HEK293T (cell line): ENCODE measurements at regions of chr10 and their contacts with region 1.

Region 1: DNA sequence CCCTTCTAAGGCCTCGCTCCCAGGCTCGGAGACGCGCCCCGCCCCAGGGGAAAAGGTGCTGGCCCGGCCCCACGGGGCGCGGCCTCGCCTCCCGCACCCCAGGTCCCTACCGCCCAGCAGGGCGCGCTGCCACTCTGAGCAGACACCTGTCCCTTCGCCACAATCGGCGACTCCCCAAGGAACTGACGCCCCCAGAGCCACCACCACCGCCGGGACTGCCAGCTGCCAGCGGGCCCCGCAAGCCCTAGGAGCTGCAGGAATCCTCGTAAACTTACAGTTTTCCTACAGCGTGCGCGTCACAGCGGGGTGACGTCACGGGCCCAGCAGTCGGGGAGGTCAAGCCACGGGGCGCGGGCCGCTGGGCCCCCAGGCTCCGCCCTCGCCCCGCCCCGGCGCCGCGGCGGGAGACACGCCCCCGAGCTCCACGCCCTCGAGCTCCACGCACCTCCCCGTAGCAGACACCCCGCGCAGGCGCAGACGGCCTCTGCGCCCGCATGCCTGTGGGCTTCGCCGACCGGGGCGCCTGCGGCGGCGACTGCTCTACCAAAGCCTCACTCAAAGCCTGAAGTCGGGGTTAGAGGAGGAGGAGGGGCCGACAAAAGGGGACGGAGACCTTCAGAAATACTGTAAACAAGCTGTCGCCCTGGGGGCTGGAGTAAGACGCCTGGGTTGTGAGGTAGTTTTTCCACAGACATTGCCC is at the start of gene ZNF438:
- DNase-seq: peak; percentile 93

Region 2: GRCh38 chr10:30783939-30784500 is 247.7 kb before region 1 on chr10:
- CTCF ChIA-PET with region 1: interaction called, 3 read pairs
- POLR2A ChIA-PET with region 1: interaction called, 18 read pairs
- DNase-seq: peak; percentile 79

Region 3: DNA sequence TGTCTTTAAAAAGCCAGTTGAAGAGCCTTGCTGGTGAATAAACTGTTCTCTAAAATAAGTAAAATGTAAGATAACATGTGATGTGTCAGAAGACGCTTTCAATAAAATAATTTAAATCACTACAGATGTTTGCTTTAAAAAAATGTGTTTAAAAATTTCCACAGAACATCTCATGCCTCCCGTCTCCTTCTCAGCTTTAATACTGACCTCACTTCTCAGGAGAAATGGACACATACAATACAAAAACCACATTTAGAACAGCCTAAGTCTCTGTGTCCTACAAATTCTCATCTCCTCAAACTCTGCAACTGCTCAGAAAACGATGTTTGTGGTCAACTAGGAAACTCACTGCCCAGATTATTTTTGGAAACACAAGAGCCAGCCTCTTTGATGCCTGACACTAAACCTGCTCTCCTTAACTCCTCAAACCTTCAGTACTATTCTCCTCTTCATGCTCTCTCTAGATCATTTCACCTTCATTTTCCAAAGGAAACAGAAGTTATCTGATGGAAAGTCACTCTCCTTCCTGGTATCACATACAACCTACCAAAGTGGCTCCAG is 120.3 kb before region 1 on chr10:
- CTCF ChIA-PET with region 1: no interaction called
- POLR2A ChIA-PET with region 1: no interaction called
- DNase-seq: no peak

Region 4: GRCh38 chr10:30970760-30971460 is 60.8 kb before region 1 on chr10:
- CTCF ChIA-PET with region 1: no interaction called
- POLR2A ChIA-PET with region 1: no interaction called
- DNase-seq: no peak

Region 5: DNA sequence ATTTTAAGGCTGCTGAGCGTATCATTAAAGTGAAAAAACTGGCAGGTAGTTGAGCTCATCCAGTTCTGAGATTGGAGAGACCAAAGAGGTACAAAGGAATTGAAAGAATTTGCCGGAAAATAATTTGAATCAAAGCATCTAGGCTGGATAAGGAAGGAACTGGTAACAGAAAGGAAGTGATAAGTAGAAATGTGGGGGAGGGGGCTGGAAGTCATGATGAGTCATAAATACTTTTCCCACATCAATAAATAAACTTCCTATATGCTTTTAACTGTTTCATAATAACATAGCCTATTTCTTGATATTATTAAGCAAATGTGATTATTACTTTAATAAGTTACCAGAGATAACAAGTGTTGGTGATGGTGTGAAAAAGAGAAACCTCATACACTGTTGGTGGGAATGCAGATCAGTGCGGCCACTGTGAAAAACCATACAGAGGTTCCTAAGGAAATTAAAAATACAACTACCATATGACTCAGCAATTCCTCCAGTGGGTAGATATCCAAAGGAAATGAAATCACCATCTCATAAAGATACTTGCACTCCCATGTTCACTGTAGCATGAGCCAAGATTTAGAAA is 27.0 kb before region 1 on chr10:
- CTCF ChIA-PET with region 1: no interaction called
- POLR2A ChIA-PET with region 1: interaction called, 11 read pairs
- DNase-seq: no peak